Right ventricle myocardium inferior (tissue), 1 donor: ENCODE measurements at regions of chr16 and their contacts with region 1.

Region 1: DNA sequence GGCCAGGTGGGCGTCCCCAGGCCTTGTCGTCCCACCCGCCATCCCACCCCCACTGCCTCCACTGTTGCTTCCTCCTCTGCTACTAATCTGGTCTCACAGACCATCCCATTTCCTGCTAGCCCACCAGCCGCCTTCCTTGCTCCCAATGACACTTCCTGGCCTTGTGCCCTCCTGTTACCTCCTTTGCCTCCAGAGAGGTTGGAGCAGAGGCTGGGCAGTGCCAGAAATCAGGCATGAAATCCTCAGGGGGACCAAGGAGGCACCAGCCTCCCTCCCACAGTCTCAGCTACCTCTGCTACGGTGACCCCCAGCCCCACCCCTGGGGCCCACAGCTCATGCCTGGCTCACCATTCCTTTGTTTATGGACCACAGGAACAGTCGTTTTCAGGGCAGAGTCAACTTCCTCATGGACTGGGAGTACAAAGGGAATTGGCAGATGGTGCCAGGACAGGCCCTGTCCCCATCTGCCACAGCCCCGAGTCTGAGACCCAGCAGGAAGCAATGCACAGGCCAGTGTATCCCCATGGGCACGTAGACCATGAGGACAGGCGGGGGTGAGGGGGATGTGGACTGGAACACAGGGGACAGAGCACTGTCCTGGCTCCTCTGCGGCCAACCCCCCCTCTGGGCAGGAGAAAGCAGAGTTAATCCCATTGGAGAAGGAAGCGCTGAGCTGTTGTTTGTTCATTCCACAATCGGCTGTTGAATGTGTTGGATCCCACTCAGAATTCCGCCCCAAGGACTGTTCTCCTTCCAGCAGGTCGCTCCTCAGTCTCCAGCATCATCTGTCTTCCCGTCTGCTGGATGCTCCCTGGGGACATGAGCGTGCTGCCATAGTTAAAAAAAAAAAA is 2.1 kb upstream of the CDH5 start:
- DNase-seq: no peak
- ATAC-seq: peak; percentile 51

Region 2: DNA sequence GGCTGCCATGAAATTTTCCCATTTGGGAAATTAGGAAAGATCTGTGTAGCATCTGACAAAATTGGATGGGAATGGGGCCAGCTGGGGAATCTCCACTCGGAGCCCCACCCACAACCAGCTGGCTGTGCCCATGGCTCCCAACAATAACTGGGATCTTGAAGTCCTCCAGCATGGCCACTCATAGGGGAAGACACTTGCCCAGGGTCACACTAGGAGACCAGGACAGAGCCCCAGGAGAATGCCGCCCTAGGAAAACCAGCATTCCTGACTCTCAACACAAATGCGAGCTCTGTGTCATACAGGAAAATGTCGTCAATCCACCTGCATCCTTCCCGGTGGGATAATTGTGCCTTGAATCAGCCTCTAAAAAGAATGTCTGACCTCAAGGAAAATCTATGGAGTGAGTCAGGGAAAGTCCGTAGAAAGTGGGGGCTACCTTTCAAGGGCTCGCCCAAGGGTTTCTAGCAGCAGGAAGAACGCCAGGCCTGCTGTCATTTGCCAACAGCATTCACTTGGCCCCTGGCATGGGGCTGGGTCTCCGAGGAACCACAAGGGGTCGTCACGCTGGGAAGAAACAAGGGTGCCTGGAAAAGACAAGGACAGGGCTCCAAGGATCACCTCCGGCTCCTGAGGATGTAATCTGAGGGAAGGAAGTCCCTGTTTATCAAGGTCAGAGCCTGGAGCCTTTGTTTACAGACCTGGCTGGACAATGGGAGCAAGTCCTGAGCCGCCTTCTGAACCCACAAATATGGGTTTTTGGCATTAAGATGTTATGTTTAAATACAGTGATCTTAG is 18.0 kb after region 1 on chr16:
- intact Hi-C with region 1: loop called (anchors 2 kb)
- DNase-seq: no peak
- ATAC-seq: peak; percentile 61

Region 3: GRCh38 chr16:66399930-66400329 is 35.6 kb after region 1 on chr16:
- intact Hi-C with region 1: loop called (anchors 5 kb)
- DNase-seq: no peak
- ATAC-seq: peak; percentile 69

Region 4: GRCh38 chr16:66444049-66444481 is 79.7 kb after region 1 on chr16:
- intact Hi-C with region 1: no loop called
- DNase-seq: no peak
- ATAC-seq: no peak